Psoas muscle (tissue), 8 donors: ENCODE measurements at regions of chr15 and their contacts with region 1.

Region 1: DNA sequence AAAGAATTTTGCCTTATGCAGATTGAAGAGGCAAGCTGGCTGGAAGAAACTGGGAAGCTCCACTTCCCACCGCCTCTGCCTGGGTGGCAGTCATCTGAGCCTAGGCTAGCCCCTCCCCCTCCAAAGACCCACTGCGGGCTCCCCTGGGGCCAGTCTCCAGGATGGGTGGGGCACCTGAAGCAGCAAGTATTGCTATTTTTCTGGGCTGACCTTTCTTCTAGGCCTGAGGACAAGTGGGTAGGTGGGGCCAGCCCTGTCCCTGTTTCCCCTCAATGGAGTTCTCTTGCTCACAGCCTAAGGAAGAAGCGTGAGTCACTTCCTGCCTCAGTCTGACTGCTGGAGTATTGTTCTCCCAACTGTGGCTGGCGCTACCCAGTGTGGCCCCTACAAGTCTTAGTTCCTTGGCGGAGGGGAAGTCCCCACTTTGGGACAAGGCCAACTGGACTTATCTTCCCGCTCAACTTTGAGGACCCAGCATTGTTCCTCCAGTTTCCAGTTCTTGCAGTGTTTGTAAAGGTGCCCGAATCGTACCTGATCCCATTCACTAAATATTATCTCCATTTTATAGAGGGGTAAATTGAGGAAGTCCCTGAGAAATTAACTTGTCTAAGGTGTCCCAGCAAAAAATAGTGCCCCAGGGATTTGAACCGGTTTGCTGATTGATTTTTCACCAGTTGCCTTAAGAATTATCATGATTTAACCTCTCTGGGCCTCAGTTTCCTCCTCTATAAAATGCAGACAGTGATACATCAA is 1.4 kb downstream of the FURIN start:
- DNase-seq: peak; percentile 77 to 84
- ATAC-seq: peak; percentile 59 to 70 (median 62)
- H3K4me3 ChIP-seq: peak overlapping the region; percentile 82
- H3K27ac ChIP-seq: peak overlapping the region; percentile 93
- H3K4me1 ChIP-seq: peaks cover 39% of the 10 kb centered on the region
- H3K27me3 ChIP-seq: no peaks in the 10 kb centered on the region
- CTCF ChIP-seq: no peak

Region 2: GRCh38 chr15:90660195-90660998 is 209.4 kb before region 1 on chr15:
- intact Hi-C with region 1: loop called in 1 of 2 experiments (anchors 5 kb)
- DNase-seq: peak; percentile 85 to 91
- ATAC-seq: peak; percentile 87 to 90 (median 89)
- H3K4me3 ChIP-seq: peak overlapping the region; percentile 59
- H3K27ac ChIP-seq: peak overlapping the region; percentile 94
- H3K4me1 ChIP-seq: peaks cover 40% of the 10 kb centered on the region
- H3K27me3 ChIP-seq: no peaks in the 10 kb centered on the region
- CTCF ChIP-seq: no peak

Region 3: DNA sequence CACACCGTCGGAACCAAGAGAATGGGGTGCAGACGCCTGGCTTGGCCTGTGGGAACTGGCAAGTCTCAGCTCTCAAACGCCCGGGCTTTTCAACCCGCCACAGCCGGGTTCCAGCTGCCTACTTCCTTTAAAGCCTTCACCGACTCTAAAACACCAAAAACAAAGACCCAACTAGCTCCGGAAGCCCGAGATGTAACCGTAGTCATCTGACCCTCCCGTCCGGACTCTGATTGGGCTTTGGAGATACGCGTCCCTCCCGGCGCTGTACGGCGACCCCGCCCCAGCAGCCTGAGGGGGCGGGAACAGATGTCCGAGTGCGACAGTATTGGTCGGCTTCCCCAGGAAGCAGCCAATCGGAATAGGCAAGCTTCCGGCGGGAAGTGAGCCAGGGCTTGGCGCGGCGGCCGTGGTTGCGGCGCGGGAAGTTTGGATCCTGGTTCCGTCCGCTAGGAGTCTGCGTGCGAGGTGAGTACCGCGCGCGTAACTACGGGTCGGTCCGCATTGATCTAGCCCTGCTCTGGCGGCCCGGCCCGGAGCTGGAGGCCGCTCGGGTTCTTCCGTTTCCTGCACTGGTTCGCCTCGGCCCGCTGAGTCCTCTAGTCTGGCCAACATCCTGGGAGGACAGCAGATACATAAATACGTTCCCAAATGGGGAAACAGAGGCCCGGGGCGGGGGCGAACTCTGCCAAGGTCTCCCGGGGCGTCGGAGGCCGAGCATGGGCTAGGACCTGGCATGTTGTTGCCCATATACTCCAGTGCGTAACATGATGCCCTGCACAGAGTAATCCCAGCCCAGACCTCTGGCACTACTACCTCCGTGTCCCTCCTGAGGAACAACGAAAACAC is 152.6 kb before region 1 on chr15 and contains the start of gene BLM:
- intact Hi-C with region 1: loop called (anchors 5 kb)
- DNase-seq: peak; percentile 96 to 98
- ATAC-seq: peak; percentile 100
- H3K4me3 ChIP-seq: peak within 1 kb of the TSS; percentile 92
- H3K27ac ChIP-seq: peak within 1 kb of the TSS; percentile 95
- H3K4me1 ChIP-seq: peaks cover 6% of the 10 kb centered on the region
- H3K27me3 ChIP-seq: no peaks in the 10 kb centered on the region
- CTCF ChIP-seq: peak; percentile 46
- total RNA-seq, gene BLM: 0.27 to 2.4 (median 1.4) TPM

Region 4: GRCh38 chr15:90915808-90916440 is 46.1 kb after region 1 on chr15:
- intact Hi-C with region 1: no loop called
- DNase-seq: peak; percentile 61 to 87
- ATAC-seq: peak; percentile 77 to 89 (median 84)
- H3K4me3 ChIP-seq: peak overlapping the region; percentile 36
- H3K27ac ChIP-seq: peak overlapping the region; percentile 87
- H3K4me1 ChIP-seq: peaks cover 23% of the 10 kb centered on the region
- H3K27me3 ChIP-seq: no peaks in the 10 kb centered on the region
- CTCF ChIP-seq: no peak